HAP-1 (cell line): ENCODE measurements at regions of chr7 and their contacts with region 1.

Region 1: GRCh38 chr7:31633894-31634494 is 53.0 kb upstream of the PPP1R17 start:
- DNase-seq: peak; percentile 60 to 72
- H3K4me3 ChIP-seq: no peak overlapping the region
- H3K4me1 ChIP-seq: no peaks in the 10 kb centered on the region
- H3K27me3 ChIP-seq: peaks cover 4% of the 10 kb centered on the region; the same call in 1 of the 2 replicates

Region 2: DNA sequence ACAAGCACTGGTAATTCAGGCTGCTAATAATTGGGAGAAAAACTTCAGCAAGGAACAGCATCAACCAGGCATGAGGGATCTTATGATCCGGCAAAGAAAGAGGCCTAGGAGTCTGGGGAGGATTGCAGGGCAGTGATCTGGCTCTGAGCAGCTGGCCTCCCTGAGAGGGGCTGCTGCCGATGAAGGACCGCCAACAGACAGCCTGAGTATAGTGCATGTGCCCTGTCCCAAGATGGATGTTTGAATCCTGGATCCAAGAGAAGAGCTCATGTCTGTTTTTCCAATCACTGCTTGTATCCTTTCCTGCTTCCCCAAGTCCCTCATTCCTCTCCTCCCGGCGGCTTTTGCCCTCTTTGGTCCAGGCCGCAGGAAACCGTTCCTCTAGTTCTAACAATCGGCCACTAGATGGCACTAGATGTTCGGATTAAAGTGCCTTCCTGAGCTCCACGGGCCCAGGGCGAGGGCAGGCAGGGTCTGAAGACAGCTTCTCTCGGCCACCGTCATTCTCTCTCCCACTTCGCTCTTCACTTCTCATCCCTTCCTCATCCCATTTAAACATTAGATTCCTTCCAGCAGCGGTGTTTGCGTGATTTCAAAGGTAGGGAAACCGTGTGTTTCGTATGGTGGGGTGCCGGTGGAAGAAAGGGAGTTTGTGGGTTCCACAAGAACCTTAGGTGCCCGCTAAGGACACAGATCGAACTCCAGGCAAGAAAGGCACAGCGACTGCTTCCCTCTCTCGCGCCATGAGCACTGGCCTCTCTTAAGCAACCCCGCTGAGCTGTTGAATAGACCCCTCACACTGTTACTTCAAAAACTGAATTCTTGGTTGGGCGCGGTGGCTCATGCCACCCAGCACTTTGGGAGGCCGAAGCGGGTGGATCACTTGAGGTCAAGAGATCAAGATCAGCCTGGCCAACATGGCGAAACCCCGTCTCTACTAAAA is 499.5 kb before region 1 on chr7:
- in situ Hi-C with region 1: loop called (anchors 10 kb)
- DNase-seq: peak; percentile 65 to 81
- H3K4me3 ChIP-seq: no peak overlapping the region
- H3K4me1 ChIP-seq: no peaks in the 10 kb centered on the region
- H3K27me3 ChIP-seq: no peaks in the 10 kb centered on the region

Region 3: DNA sequence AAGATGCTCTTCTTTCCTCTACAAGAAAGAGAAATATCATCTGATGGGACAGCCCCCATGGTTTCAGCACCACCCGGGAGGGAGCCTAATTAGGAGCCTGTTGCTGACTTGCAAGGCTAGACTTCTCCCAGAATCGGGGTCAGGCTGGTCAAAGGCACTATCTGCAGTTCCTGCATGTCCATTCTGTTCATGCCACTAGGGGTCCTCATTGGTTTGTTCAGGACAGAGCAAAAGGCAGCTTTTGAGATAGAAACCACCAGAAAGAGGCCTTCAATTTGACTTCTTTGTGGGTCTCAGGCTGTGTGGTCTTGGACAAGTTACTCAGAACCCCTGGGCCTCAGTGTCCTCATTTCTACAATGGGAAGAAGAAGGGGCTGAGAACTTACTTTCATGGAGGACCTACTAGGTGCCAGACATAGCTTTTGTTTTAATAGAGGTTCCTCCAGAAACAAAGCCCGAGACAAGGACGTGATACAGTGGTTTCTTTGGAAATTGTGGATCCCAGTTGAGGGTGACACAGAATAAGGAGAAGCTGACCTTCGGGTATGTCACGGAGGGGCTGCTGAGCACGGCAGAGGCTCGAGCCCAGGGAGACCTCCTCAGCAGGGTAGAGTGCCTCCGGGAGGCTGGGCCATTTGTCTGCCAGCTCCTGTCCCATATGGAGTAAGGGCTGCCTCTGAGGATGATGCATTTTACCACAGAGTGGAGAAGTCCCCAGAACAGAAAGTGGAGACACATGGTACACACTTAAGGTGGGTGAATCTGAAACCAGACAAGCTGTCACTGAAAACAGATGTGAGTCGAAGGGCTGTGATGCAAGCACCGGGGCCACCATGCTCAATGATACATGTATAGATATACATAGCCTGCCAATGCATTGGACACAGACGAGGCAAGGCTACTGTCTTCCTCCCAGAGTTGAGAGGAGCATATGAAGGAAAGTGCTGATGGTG is 260.4 kb before region 1 on chr7:
- in situ Hi-C with region 1: loop called (anchors 10 kb)
- DNase-seq: peak; percentile 48 to 67
- H3K4me3 ChIP-seq: no peak overlapping the region
- H3K4me1 ChIP-seq: no peaks in the 10 kb centered on the region
- H3K27me3 ChIP-seq: peaks cover 5% of the 10 kb centered on the region

Region 4: GRCh38 chr7:31443457-31443856 is 190.5 kb before region 1 on chr7:
- in situ Hi-C with region 1: loop called (anchors 5 kb)
- DNase-seq: peak; percentile 8 to 48
- H3K4me3 ChIP-seq: no peak overlapping the region
- H3K4me1 ChIP-seq: no peaks in the 10 kb centered on the region
- H3K27me3 ChIP-seq: no peaks in the 10 kb centered on the region

Region 5: DNA sequence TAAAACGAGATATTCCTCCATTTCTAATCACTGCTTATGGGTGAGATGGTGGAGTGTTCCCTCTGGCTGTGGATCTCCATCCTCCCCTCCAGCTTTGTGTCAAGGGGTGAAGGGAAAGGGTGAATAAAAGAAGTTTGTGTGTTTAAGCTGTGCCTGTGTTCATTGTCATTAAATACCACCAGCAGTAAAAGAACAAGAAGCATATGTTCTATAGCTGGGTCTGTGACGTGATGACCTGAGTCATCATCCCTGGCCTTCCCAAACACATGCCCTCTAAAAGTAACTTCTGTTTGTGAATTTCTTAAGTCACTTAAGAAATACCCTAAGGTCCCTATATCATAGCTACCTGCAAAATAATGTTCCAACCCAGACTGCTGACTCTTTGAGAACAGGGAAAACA is 157.9 kb after region 1 on chr7:
- in situ Hi-C with region 1: no loop called
- DNase-seq: no peak
- H3K4me3 ChIP-seq: no peak overlapping the region
- H3K4me1 ChIP-seq: no peaks in the 10 kb centered on the region
- H3K27me3 ChIP-seq: no peaks in the 10 kb centered on the region